ENCODE measurements at regions of chr14 and their contacts with region 1.

Region 1: DNA sequence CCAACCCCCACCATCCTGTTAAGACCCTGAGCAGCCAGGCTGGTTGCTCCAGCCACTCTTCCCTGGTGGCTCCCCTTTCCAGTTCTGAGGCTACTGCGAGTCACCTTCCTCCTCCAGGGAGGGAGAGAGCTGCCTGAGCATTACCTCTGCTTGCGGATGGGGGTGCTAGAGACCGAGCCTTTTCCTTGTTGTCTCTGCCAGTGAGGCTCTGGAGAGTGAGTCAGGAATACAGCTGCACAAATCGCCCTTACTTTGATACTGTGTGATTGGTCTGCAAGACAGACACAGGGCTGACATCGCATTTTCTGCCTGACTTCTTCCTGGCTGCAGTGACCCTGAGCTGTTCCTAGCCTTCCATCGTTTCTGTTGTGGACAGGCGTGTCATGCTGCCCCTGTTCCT is 94.3 kb downstream of the SLC25A47 start:
- DNase-seq: peak; percentile 88 to 94
- ATAC-seq: peak; percentile 97 to 98
- H3K4me3 ChIP-seq: no peak overlapping the region
- H3K27ac ChIP-seq: peak overlapping the region; percentile 73 to 90
- H3K4me1 ChIP-seq: peaks cover 26% of the 10 kb centered on the region
- CTCF ChIP-seq: peak; percentile 77
- EP300 ChIP-seq: no peak
- POLR2A ChIP-seq: no peak
- RAD21 ChIP-seq: peak; percentile 84 to 93

Region 2: DNA sequence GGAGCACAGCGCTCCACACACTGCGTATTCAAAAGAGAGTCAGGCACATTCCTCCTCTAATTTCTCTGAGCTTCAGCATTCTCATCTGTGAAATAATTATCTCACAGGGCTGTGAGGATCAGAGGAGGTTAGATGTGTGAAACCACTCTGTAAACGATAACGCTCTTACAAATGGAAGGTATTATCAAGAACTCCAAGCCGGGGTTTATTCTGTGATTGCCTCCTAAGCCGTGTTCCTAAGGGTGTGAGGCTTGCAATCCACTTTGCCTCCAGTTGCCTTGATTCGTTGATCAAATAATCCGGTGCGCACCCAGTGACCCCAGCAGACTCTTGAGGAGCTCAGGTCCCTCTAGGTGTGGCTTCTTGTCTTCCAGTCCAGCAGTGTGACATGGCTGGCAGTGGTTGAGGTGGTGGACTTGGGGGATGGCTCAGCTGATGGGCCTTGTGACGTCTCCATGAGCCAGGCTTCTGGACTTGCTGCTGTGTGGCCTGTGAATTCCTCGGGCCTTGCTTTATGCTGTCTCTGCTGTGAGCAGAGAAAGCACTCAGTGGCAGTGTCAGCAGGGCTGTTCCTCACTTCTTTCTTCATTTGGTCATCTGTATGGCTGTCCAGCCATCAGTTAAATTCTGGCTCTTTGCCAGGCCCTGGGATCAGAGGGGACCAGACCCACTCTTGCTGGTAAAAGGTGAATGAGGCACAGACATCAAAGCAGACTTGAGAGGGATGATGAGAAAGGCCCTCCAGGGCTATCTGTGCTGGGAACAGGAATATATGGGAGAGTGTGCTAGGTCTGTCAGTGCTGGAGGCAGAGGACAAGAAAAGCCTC is 23.3 kb before region 1 on chr14:
- CTCF ChIA-PET with region 1: interaction called, 10 read pairs
- POLR2A ChIA-PET with region 1: no interaction called
- DNase-seq: no peak
- ATAC-seq: no peak
- H3K4me3 ChIP-seq: no peak overlapping the region
- H3K27ac ChIP-seq: peak overlapping the region in 1 of 2 experiments; percentile 43; a peak in 2 of 6 replicates
- H3K4me1 ChIP-seq: peaks cover 42% of the 10 kb centered on the region
- CTCF ChIP-seq: no peak
- EP300 ChIP-seq: no peak
- POLR2A ChIP-seq: no peak
- RAD21 ChIP-seq: no peak

Region 3: GRCh38 chr14:100400115-100400514 is 17.4 kb before region 1 on chr14:
- CTCF ChIA-PET with region 1: interaction called, 18 read pairs
- POLR2A ChIA-PET with region 1: no interaction called
- DNase-seq: no peak
- ATAC-seq: no peak
- H3K4me3 ChIP-seq: no peak overlapping the region
- H3K27ac ChIP-seq: peak overlapping the region in 1 of 2 experiments; percentile 42; a peak in 3 of 6 replicates
- H3K4me1 ChIP-seq: peaks cover 38% of the 10 kb centered on the region
- CTCF ChIP-seq: no peak
- EP300 ChIP-seq: no peak
- POLR2A ChIP-seq: no peak
- RAD21 ChIP-seq: no peak

Region 4: GRCh38 chr14:100406505-100407131 is 10.8 kb before region 1 on chr14:
- CTCF ChIA-PET with region 1: interaction called, 25 read pairs
- POLR2A ChIA-PET with region 1: no interaction called
- DNase-seq: peak in 1 of 2 experiments; percentile 66
- ATAC-seq: peak in 1 of 2 experiments; percentile 28; a peak in 2 of 6 replicates
- H3K4me3 ChIP-seq: no peak overlapping the region
- H3K27ac ChIP-seq: peak overlapping the region; percentile 82 to 88
- H3K4me1 ChIP-seq: peaks cover 55% of the 10 kb centered on the region
- CTCF ChIP-seq: no peak
- EP300 ChIP-seq: 0 out of 5 replicates have a peak, but pooled peaks of 1 of the 2 experiments have one; percentile 22
- POLR2A ChIP-seq: no peak
- RAD21 ChIP-seq: no peak

Region 5: DNA sequence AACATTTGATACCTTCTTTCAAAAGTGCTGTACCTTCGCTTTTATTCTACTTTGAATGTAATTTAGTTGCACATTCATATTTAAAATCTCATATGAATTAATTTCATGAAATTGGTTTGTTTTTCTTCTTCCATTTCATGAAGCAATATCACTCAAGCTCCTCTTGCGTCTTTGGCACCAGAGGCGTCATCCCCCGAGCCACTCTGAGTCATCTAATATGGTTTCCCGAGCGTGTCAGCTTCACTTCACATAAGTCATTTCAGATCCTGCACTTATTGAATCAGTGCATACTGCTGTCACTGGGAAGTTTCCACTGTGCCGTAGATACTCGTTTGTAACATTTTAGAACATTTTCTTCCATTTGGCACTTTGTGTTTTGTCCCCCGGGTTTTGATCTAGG is 11.3 kb after region 1 on chr14:
- CTCF ChIA-PET with region 1: interaction called, 22 read pairs
- POLR2A ChIA-PET with region 1: interaction called, 4 read pairs
- DNase-seq: no peak
- ATAC-seq: no peak
- H3K4me3 ChIP-seq: no peak overlapping the region
- H3K27ac ChIP-seq: no peak overlapping the region
- H3K4me1 ChIP-seq: peaks cover 14% of the 10 kb centered on the region
- CTCF ChIP-seq: no peak
- EP300 ChIP-seq: no peak
- POLR2A ChIP-seq: no peak
- RAD21 ChIP-seq: no peak

Region 6: DNA sequence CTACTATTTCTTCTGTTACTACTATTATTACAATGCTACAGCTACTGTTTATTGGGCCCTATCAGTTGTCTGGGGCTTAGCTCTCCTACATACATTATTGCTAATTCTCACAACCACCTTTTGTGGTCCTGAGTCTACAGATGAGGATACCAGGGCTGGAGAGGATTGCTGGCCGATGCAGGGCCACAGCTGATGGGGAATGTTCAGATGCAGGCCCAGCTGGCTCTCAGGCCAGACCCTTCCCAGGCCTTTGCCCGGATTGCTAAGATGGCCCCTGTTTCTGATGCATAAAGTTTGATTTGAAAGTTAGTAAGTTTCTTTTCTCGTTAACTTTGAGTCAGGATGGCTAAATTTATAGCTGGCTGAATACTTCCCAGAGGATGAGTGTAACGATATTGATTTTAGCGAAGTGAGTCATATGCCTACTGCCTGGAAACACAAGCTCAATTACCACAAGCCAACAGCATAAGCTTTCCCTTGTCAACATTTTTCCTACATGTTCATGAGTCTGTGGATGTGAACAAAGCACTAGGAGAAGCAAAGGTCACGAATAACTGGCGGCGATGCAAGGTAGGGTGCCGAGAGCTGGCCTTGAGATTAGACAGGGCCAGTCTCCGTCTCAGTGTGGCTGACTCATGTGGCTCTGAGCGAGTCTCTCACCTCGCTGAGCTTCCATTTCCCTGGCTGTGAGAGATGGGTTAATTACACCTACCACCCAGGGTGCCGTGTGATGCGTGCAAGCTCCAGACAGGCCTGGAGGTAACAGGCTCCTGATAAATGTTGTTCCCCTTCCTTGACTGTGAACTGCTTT is 58.8 kb after region 1 on chr14:
- CTCF ChIA-PET with region 1: interaction called, 12 read pairs
- POLR2A ChIA-PET with region 1: interaction called, 3 read pairs
- DNase-seq: peak; percentile 78 to 91
- ATAC-seq: peak; percentile 95 to 96
- H3K4me3 ChIP-seq: 0 out of 3 replicates have a peak overlapping the region, but pooled peaks have one; percentile 9
- H3K27ac ChIP-seq: peak overlapping the region; percentile 81 to 92
- H3K4me1 ChIP-seq: peaks cover 34% of the 10 kb centered on the region
- CTCF ChIP-seq: no peak
- EP300 ChIP-seq: peak; percentile 41 to 78; a peak in 3 of 5 replicates
- POLR2A ChIP-seq: no peak
- RAD21 ChIP-seq: no peak

Measured in A549 (cell line).